ENCODE measurements at regions of chr3 and their contacts with region 1.

Region 1: DNA sequence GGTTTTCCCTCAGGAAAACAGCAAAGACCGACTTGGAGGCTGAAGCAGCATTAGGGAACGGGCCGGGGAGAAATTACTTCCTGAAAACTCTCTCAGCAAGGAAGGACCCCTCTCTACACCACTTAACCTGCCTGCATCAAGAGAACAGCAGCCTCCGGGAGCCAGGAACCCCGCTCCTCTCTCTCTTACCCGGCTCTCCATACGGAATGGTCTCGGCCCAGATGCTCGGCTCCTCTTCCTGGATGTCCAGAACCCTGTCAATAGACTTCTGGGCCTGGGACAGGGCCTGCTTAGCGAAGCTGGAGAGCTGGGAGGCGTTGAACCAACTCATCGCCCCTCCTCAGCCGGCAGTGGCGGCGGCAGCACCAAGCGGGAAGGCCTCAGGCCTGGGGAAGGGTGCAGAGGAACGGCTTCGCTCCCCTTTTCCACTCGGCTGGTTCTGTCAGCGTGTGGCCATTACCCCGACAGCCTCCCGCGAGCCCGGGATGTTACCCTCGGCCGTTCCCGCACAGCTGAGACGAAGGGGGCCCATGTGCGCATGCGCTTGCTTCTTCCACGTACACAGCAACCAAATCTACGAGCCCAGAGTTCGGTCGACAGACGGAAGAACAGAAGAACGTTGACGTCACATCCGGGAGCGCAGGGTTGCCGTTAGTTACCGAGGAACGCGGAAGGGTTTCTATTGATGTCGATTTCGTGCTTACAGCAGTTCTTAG is at the start of gene TMF1:
- DNase-seq: peak; percentile 97 to 98 (median 98)
- ATAC-seq: peak; percentile 98
- H3K4me3 ChIP-seq: peak within 1 kb of the TSS; percentile 64 to 91 (median 86)
- H3K27ac ChIP-seq: peak within 1 kb of the TSS; percentile 83 to 96 (median 94)
- H3K4me1 ChIP-seq: peaks cover 0 to 40% (median 28%) of the 10 kb centered on the region in 12 donors
- H3K27me3 ChIP-seq: no peaks in the 10 kb centered on the region
- CTCF ChIP-seq: no peak
- POLR2A ChIP-seq: peak in 1 of 2 donors; percentile 68
- total RNA-seq, gene TMF1: 12.6 to 23.4 (median 20.1) TPM

Region 2: GRCh38 chr3:69013253-69014021 is 38.5 kb before region 1 on chr3 and contains the start of gene EOGT:
- intact Hi-C with region 1: loop called in 1 of 10 experiments (anchors 5 kb)
- DNase-seq: peak; percentile 91 to 95 (median 94)
- ATAC-seq: peak; percentile 71 to 92 (median 90)
- H3K4me3 ChIP-seq: peak within 1 kb of the TSS; percentile 53 to 94 (median 86)
- H3K27ac ChIP-seq: peak within 1 kb of the TSS; percentile 94 to 99 (median 98)
- H3K4me1 ChIP-seq: peaks cover 0 to 47% (median 24%) of the 10 kb centered on the region in 12 donors
- H3K27me3 ChIP-seq: no peaks in the 10 kb centered on the region
- CTCF ChIP-seq: peak; percentile 39 to 84 (median 64)
- POLR2A ChIP-seq: peak in 1 of 2 donors; percentile 52
- total RNA-seq, gene EOGT: 21.5 to 53.1 (median 34.5) TPM

Region 3: GRCh38 chr3:69079269-69080159 is 27.6 kb after region 1 on chr3:
- intact Hi-C with region 1: loop called in 2 of 10 experiments (anchors 2 kb)
- DNase-seq: peak in 2 of 5 donors; percentile 38 to 67
- ATAC-seq: peak in 2 of 4 donors; percentile 57 to 60
- H3K4me3 ChIP-seq: peak overlapping the region; percentile 66 to 93 (median 84)
- H3K27ac ChIP-seq: peak overlapping the region in 11 of 12 donors; percentile 81 to 99 (median 86)
- H3K4me1 ChIP-seq: peaks cover 9 to 69% (median 51%) of the 10 kb centered on the region in 12 donors
- H3K27me3 ChIP-seq: no peaks in the 10 kb centered on the region
- CTCF ChIP-seq: no peak
- POLR2A ChIP-seq: no peak

Region 4: GRCh38 chr3:69120879-69121464 is 69.1 kb after region 1 on chr3:
- intact Hi-C with region 1: loop called in 1 of 10 experiments (anchors 1 kb)
- DNase-seq: peak in 4 of 5 donors; percentile 41 to 66 (median 55)
- ATAC-seq: peak in 3 of 4 donors; percentile 33 to 51 (median 50)
- H3K4me3 ChIP-seq: peak overlapping the region; percentile 21 to 63 (median 50)
- H3K27ac ChIP-seq: peak overlapping the region in 11 of 12 donors; percentile 61 to 91 (median 83)
- H3K4me1 ChIP-seq: peaks cover 0 to 19% (median 4%) of the 10 kb centered on the region in 12 donors
- H3K27me3 ChIP-seq: no peaks in the 10 kb centered on the region
- CTCF ChIP-seq: peak; percentile 87 to 96 (median 94)
- POLR2A ChIP-seq: no peak

Region 5: DNA sequence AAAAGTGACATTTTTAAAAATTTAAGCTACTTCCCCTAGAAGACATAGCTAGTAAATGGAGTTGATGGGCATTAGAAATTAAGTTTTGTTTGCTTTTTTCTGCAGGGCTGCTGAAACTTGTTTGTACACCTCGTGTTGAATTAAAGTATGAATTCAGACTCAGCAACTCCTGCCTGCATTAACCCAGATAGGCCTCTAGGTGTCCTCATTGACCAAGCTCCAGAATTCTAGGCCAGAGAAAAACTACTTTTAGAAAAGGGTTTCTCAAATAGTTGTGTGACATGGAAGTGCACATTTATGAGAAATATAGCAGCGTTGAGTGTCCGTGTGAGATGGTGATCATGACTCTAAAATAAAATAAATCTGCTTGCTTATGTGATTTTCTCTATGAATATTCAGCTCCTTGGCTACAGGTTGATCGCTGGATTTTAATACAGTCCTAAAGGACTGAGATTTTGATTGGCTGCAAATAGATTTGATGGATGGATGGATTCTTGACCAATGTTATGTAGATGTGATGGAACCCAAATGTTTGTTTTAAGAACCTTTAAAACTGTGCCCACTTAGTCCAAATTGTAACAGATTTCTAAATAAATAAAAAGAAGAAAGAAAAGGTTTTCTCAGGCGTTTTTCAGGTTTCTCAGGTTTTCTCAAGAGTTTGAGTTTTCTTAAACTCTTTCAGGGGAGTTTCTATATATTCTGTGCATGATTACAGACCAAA is 109.8 kb after region 1 on chr3:
- intact Hi-C with region 1: no loop called
- DNase-seq: peak in 1 of 5 donors; percentile 23
- ATAC-seq: peak in 3 of 4 donors; percentile 52 to 66 (median 55)
- H3K4me3 ChIP-seq: no peak overlapping the region
- H3K27ac ChIP-seq: no peak overlapping the region
- H3K4me1 ChIP-seq: peaks cover 0 to 4% (median 0%) of the 10 kb centered on the region in 12 donors
- H3K27me3 ChIP-seq: no peaks in the 10 kb centered on the region
- CTCF ChIP-seq: peak; percentile 90 to 99 (median 94)
- POLR2A ChIP-seq: no peak